A549 (cell line): ENCODE measurements at regions of chr3 and their contacts with region 1.

Region 1: DNA sequence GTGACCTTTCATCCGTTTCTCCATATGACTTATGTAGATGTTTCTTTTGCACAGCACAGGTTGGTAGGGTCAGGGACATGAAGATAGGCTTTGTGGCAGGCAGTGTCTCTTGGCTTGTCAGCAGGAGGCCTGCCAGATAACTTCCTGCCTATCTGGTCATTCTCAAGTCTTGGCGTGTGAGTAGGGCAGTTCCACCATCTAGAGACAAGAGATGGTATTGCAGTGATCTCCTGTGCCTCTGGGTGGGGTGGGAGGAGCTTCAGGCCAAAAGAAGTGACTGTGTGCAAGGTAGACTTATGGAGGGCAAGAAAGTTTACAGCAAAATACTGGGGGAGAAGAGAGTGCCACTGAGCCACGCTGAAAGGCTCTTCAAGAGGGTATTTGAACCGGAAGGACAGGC is 11.0 kb downstream of the TEX264 start:
- DNase-seq: peak; percentile 81 to 84
- ATAC-seq: peak; percentile 92 to 98
- H3K4me3 ChIP-seq: no peak overlapping the region
- H3K27ac ChIP-seq: no peak overlapping the region
- H3K4me1 ChIP-seq: peaks cover 4% of the 10 kb centered on the region; the same call in 1 of the 3 replicates
- CTCF ChIP-seq: peak; percentile 55
- EP300 ChIP-seq: no peak
- POLR2A ChIP-seq: no peak
- RAD21 ChIP-seq: peak; percentile 63 to 70

Region 2: GRCh38 chr3:51391075-51391567 is 291.0 kb before region 1 on chr3 and contains the start of gene RBM15B:
- CTCF ChIA-PET with region 1: interaction called, 26 read pairs
- POLR2A ChIA-PET with region 1: no interaction called
- DNase-seq: peak; percentile 82 to 95
- ATAC-seq: peak; percentile 88 to 93
- H3K4me3 ChIP-seq: peak within 1 kb of the TSS; percentile 92
- H3K27ac ChIP-seq: peak within 1 kb of the TSS; percentile 94 to 99
- H3K4me1 ChIP-seq: peaks cover 38% of the 10 kb centered on the region
- CTCF ChIP-seq: peak; percentile 75
- EP300 ChIP-seq: no peak
- POLR2A ChIP-seq: peak; percentile 61; the same call in 1 of the 2 replicates
- RAD21 ChIP-seq: peak; percentile 34 to 41; a peak in 2 of 5 replicates
- polyA plus RNA-seq, gene RBM15B: 7.9 and 10.9 TPM in 2 replicates

Region 3: GRCh38 chr3:51637941-51638471 is 44.1 kb before region 1 on chr3:
- CTCF ChIA-PET with region 1: interaction called, 36 read pairs
- POLR2A ChIA-PET with region 1: no interaction called
- DNase-seq: peak; percentile 72 to 83
- ATAC-seq: peak; percentile 99
- H3K4me3 ChIP-seq: no peak overlapping the region
- H3K27ac ChIP-seq: no peak overlapping the region
- H3K4me1 ChIP-seq: no peaks in the 10 kb centered on the region
- CTCF ChIP-seq: peak; percentile 80
- EP300 ChIP-seq: no peak
- POLR2A ChIP-seq: no peak
- RAD21 ChIP-seq: peak; percentile 58 to 76

Region 4: DNA sequence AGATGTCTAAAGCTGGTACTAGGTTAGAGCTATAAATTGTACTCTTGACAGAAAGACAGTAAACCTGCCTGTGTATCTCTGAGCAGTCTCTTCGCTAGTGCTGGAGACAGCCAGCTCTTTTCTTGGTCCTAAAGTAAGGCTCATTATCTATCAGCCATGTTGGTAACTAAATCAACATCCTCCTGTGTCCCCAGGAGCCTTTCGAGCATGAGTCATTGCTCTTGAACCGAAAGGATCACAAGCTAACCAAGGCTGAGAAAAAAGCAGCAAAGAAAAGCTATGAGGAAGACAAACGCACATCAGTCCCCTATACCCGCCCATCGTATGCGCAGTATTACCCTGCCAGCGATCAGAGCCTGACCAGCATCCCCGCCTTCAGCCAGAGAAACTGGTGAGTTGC is 36.0 kb before region 1 on chr3:
- CTCF ChIA-PET with region 1: interaction called, 36 read pairs
- POLR2A ChIA-PET with region 1: no interaction called
- DNase-seq: no peak
- ATAC-seq: no peak
- H3K4me3 ChIP-seq: no peak overlapping the region
- H3K27ac ChIP-seq: no peak overlapping the region
- H3K4me1 ChIP-seq: no peaks in the 10 kb centered on the region
- CTCF ChIP-seq: no peak
- EP300 ChIP-seq: no peak
- POLR2A ChIP-seq: no peak
- RAD21 ChIP-seq: no peak

Region 5: DNA sequence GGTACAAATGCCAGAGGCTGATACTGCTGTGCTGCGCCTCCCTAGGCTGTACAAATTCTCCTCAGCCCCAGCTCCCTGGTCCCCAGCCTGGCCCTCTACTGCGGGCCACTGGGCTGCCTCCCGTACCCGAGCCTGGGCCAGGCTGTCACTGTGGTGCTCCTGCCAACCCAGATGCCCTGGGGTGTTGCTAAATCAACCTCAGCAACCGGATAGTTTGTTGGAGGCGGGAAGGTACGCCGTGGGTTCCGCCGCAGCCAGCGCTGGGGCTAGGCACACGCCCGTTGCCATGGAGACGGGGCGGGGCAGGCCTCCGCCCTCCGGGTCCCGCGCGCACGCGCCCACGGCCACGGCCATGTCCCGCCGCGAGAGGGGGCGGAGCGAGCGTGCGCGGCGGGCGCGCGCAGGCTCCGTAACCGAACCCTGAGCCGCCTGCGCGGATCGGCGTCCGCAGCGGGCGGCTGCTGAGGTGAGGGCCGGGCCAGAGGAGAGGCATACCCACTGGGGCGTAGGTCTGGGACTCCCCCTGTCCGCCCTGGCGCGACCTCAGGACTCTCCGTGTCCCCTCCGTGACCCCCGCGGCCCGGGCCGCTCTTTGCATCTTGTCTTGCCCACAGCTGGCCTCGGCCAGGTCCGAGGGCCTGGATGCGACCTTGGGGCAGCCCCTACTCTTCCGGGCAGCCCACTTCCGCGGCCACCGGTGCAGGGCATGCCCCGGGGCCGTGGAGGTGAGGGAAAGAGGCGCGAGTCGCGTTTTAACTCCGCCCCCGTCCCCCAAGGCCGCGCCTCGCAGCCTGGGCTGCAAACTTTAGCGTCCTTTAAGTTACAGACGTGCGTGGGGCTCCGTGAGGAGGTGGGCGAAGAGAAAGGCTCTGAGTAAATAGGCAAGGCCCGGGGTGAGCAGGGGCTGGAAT is 11.0 kb before region 1 on chr3 and contains the start of gene TEX264:
- CTCF ChIA-PET with region 1: interaction called, 34 read pairs
- POLR2A ChIA-PET with region 1: no interaction called
- DNase-seq: peak; percentile 77 to 80
- ATAC-seq: peak; percentile 77 to 88
- H3K4me3 ChIP-seq: peak within 1 kb of the TSS; percentile 58
- H3K27ac ChIP-seq: peak within 1 kb of the TSS; percentile 86 to 98
- H3K4me1 ChIP-seq: peaks cover 18% of the 10 kb centered on the region
- CTCF ChIP-seq: no peak
- EP300 ChIP-seq: no peak
- POLR2A ChIP-seq: peak; percentile 82
- RAD21 ChIP-seq: no peak
- polyA plus RNA-seq, gene TEX264: 47.9 and 59.3 TPM in 2 replicates

Region 6: DNA sequence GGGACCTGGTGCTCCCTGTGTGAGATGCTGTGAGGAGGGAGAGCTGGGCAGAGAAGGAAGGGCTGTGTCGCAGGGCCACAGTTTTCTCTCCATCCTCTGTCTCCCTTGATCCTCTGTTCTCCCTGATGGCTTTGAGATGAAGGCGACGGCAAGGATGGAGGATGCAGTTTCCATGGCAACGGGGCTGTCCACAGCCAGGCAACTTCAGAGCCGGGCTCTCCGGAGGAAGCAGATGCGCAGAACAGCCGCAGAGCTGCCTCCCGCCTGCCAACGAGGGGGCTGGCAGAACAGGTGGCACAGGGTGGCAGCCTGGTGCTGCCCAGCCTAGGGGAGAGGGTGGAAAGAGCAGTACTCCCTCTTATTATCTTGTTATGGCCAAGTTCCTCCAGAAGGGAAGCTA is 14.9 kb after region 1 on chr3:
- CTCF ChIA-PET with region 1: interaction called, 29 read pairs
- POLR2A ChIA-PET with region 1: no interaction called
- DNase-seq: no peak
- ATAC-seq: no peak
- H3K4me3 ChIP-seq: no peak overlapping the region
- H3K27ac ChIP-seq: no peak overlapping the region
- H3K4me1 ChIP-seq: no peaks in the 10 kb centered on the region
- CTCF ChIP-seq: no peak
- EP300 ChIP-seq: no peak
- POLR2A ChIP-seq: no peak
- RAD21 ChIP-seq: no peak